ENCODE measurements at regions of chr2 and their contacts with region 1.

Region 1: DNA sequence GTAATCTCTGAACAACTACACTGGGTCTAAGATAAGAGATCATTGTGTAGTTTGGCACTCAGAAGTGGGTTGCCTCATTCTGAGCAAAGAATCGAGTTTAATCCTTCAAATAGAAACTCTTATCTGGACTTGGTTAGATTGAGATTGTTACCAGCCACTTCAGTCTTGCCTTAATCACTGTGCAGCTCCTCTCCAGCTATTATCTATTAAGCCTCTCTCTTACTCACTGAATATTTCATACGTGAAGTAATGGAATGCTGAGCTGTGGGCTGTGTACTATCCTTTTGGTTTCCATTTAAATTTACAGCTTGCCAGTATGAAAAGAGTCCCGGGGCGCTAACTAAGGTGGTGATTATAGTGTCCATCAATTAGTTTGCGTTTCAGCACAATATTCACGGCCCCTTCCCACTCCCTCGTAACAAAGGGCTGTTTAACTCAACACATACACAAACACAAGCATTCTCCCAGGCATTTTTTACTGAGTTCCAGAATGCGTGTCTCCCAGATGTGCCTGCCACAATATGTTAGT is 65.7 kb upstream of the NCKAP5 start:
- DNase-seq: no peak

Region 2: GRCh38 chr2:133591164-133591563 is 42.8 kb before region 1 on chr2:
- intact Hi-C with region 1: loop called in 1 of 2 experiments (anchors 1 kb)
- DNase-seq: no peak

Region 3: GRCh38 chr2:133817680-133818579 is 184.0 kb after region 1 on chr2:
- intact Hi-C with region 1: no loop called
- DNase-seq: no peak